ENCODE measurements at regions of chrX and their contacts with region 1.

Region 1: GRCh38 chrX:54044126-54044876 is at the start of gene PHF8:
- DNase-seq: peak; percentile 88
- ATAC-seq: peak; percentile 84
- H3K4me3 ChIP-seq: peak within 1 kb of the TSS; percentile 71 to 74
- H3K27ac ChIP-seq: peak within 1 kb of the TSS; percentile 92
- H3K4me1 ChIP-seq: peaks cover 8 to 20% of the 10 kb centered on the region in 2 experiments
- H3K27me3 ChIP-seq: no peaks in the 10 kb centered on the region
- CTCF ChIP-seq: no peak
- POLR2A ChIP-seq: no peak
- RAD21 ChIP-seq: no peak
- total RNA-seq, gene PHF8: 28.0 TPM

Region 2: DNA sequence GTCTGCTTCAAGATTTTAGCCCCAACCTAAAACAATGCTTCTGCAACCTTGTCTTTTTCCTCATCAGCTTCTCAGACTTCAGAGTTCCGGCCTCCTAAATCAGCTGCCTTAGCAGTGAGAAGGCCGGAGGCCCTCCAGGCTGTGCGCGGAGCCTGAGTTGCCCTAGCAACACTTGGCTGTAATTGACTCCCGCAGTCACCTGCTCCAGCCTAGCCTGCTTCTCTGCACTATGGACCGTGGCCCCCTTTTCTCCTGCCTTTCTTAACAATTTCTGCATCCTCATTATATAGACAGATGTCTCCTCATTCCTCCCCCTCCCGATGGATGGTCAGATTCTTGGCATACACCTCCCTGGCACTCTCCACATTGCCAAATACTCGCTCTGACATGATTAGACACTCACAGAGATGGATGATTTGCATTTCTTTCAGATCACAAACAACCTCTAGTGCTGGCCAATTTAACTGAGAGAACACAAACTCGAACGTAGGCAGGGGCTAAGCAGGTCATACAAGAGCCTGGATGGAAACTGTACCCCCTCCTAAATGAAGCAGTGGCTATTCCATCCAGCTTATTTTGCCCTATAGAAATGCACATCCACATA is 348.3 kb before region 1 on chrX:
- CTCF ChIA-PET with region 1: no interaction called
- POLR2A ChIA-PET with region 1: no interaction called
- RAD21 ChIA-PET with region 1: no interaction called
- intact Hi-C with region 1: no loop called
- DNase-seq: no peak
- ATAC-seq: no peak
- H3K4me3 ChIP-seq: no peak overlapping the region
- H3K27ac ChIP-seq: no peak overlapping the region
- H3K4me1 ChIP-seq: no peaks in the 10 kb centered on the region
- H3K27me3 ChIP-seq: no peaks in the 10 kb centered on the region
- CTCF ChIP-seq: no peak
- POLR2A ChIP-seq: no peak
- RAD21 ChIP-seq: no peak

Region 3: DNA sequence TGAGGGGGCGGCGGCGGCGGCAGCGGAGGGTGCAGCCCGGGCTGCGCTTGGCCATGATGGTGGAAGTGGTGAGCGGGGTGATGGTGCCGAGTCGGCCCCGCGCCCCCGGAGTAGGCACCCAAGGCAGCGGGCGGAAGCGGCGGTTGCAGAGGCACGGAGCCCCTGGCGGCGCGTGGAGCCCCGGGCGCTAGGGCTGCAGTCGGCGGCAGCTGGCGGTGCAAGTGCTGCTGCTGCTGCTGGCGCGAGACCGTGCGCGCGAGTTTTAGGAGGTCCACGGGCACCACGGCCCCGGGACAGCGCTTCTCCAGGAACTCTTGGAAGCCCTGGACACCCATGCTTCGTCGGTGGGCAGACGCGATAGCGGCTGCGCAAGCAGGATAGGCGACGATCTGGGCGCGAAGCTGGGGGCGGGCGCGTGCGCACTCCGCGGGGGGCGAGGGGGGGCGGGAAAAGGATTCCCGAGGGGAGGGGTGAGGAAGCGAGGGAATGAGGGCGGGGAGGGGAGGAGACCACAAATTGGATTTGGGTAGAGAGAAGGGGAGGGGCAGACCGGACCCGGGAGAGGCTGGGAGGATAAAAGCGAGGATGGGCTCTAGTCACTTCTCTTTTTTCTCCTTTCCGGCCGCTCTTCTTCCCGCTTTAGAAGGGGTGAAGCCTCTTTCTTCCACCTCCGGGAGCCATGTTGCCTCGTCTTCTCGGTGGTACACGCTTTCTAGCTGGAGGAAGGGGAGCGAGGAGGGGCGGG is 138.7 kb after region 1 on chrX and contains the start of gene FAM120C:
- CTCF ChIA-PET with region 1: no interaction called
- POLR2A ChIA-PET with region 1: no interaction called
- RAD21 ChIA-PET with region 1: no interaction called
- intact Hi-C with region 1: loop called (anchors 5 kb)
- DNase-seq: peak; percentile 56
- ATAC-seq: peak; percentile 72
- H3K4me3 ChIP-seq: peak within 1 kb of the TSS; percentile 60 to 70
- H3K27ac ChIP-seq: peak within 1 kb of the TSS; percentile 94
- H3K4me1 ChIP-seq: peaks cover 4 to 23% of the 10 kb centered on the region in 2 experiments; a peak in 3 of 4 replicates
- H3K27me3 ChIP-seq: no peaks in the 10 kb centered on the region
- CTCF ChIP-seq: no peak
- POLR2A ChIP-seq: no peak
- RAD21 ChIP-seq: no peak
- total RNA-seq, gene FAM120C: 6.1 TPM